GM10248 (cell line): ENCODE measurements at regions of chr4 and their contacts with region 1.

Region 1: DNA sequence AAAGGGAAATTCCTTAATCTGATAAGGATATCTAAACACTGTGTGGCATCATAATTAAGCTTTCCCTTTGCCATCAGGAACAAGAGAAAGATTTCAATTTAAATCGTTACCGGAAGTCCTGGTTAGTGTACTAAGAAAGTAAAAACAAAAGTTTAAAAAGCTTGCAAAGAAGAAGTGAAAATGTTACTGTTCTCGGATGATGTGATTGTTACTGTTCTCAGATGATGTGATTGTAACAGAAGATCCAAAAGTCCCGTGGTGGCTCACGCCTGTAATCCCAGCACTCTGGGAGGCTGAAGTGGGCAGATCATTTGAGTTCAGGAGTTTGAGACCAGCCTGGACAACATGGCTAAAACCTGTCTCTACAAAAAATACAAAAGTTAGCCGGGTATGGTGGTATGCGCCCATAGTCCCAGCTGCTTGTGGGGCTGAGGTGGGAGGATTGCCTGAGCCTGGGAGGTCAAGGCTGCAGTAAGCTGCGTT is 62.5 kb downstream of the RGS12 start:
- DNase-seq: peak; percentile 65
- CTCF ChIP-seq: no peak

Region 2: DNA sequence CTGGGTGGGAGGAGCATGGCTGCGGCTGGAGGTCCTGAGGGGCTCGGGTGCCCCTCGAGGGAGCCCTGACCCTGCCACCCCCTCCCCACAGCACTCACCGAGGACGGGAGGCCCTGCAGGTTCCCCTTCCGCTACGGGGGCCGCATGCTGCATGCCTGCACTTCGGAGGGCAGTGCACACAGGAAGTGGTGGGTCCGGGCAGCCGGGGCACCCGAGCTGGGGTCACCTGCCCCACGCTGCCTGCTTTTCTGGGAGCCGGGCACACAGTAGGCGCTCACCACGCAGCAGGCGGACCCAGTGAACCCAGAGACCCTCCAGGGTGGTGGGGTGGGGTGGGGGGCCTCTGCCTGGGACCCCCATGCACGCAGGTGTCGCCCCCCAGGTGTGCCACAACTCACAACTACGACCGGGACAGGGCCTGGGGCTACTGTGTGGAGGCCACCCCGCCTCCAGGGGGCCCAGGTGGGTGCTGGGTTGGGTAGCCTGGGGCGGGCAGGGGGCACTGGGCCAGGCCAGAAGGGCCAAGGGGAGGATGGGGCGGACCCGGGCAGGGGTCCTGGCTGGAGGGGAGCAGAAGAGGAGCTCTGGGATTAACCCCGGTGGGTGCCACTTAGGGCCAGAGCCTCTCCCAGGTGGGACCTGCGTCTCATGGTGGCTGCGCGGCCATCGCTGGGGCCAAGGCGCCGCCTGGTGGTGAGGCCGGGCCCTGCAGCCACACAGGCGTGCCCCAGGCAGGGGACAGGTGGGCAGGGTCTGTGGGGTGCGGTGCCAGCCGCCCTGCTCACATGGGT is 87.8 kb after region 1 on chr4:
- CTCF ChIA-PET with region 1: interaction called, 10 read pairs
- POLR2A ChIA-PET with region 1: no interaction called
- DNase-seq: peak; percentile 93
- CTCF ChIP-seq: peak; percentile 99